ENCODE measurements at regions of chr2 and their contacts with region 1.

Region 1: DNA sequence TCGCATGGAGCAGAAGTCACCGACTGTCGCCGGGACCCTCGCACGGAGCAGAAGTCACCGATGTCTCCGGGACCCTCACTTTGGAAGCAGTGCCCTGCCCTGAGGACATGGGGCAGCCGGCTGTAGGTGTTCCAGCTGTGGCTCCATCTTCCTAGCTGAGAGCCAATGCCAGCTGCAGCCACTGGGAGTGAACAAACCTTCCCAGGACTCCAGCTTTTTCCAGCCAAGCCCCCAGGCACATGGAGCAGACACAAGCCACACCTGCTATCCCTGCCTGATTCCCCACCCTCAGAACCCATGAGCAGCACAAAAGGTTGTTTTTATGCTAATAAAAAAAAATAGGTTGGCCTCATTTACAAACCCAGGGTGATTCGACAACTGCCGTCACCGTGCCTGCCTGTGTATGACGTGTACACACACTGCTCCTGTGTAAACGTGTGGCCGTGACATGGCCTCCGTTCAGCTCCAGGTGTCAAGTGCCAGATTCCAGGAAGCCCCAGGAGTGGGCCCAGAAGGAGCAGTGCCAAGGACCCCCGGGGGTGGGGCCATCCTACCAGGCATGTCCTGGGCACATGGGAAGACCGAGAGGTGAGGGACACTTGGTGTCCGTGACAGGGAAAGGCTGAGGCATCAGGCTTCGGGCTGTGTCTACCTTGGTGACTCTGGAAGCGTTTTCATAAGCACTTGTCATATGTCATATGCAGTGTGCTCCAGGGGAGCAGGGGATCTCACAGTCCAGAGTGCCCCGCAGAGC is 91.5 kb downstream of the EIPR1 start:
- DNase-seq: no peak
- H3K4me3 ChIP-seq: no peak overlapping the region
- H3K27ac ChIP-seq: no peak overlapping the region
- H3K4me1 ChIP-seq: peaks cover 0 to 5% (median 0%) of the 10 kb centered on the region in 4 experiments; a peak in 1 of 7 replicates
- H3K27me3 ChIP-seq: no peaks in the 10 kb centered on the region
- CTCF ChIP-seq: no peak
- EP300 ChIP-seq: no peak
- POLR2A ChIP-seq: no peak
- RAD21 ChIP-seq: no peak

Region 2: DNA sequence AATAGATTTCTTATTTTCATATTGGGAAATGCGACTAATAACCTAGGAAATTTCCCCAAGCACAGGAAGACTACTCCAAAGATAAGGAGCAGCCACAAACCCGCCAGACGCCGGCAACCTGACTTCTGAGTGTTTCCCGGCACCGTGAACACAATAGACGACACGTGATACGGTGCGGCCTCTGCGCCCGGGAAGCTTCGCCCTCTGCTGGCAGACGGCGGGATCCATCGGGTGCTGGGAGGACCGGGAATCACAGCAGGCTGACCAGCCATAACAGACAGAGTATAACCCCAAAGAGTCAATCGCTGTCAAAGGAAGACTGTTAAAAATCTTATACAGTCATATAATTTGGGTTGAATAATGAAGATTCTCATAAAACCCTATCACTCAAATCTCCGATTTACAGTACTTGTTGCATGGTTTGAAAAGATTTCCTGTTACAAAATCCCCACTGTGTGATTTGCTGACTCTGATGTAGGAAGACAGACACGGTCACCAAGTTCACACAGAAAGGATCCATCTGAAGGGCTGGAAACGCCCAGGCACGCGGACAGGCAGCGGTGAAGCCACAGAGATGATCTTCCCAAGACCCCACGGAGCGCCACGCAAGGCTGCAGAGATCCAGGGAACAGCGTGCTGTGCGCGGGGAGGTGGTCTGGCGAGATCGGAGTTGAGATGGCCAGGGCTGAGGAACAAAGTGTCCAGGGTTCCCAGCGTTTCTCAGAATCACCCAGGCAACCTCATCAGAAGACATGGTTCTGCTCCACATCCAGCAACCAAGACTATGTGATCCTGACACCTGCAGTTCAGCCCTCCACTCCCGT is 17.7 kb after region 1 on chr2:
- CTCF ChIA-PET with region 1: interaction called, 10 read pairs
- POLR2A ChIA-PET with region 1: interaction called, 4 read pairs
- DNase-seq: peak; percentile 50 to 93
- H3K4me3 ChIP-seq: no peak overlapping the region; a peak in 1 of 8 replicates
- H3K27ac ChIP-seq: 0 out of 2 replicates have a peak overlapping the region, but pooled peaks have one; percentile 37
- H3K4me1 ChIP-seq: peaks cover 3 to 10% (median 8%) of the 10 kb centered on the region in 4 experiments
- H3K27me3 ChIP-seq: no peaks in the 10 kb centered on the region
- CTCF ChIP-seq: peak; percentile 84 to 94 (median 94)
- EP300 ChIP-seq: no peak
- POLR2A ChIP-seq: no peak
- RAD21 ChIP-seq: peak; percentile 83 to 84